Activated CD4-positive, alpha-beta memory T cell treated with anti-CD3 and anti-CD28 coated beads for 36 hours (primary cell): ENCODE measurements at regions of chr5 and their contacts with region 1.

Region 1: GRCh38 chr5:32709781-32710549 is 1.2 kb upstream of the NPR3 start:
- DNase-seq: peak; percentile 70
- H3K4me3 Mint-ChIP-seq: peak overlapping the region; percentile 66
- H3K27ac Mint-ChIP-seq: no peak overlapping the region
- H3K4me1 Mint-ChIP-seq: peaks cover 33% of the 10 kb centered on the region
- H3K27me3 Mint-ChIP-seq: peaks cover 66% of the 10 kb centered on the region

Region 2: DNA sequence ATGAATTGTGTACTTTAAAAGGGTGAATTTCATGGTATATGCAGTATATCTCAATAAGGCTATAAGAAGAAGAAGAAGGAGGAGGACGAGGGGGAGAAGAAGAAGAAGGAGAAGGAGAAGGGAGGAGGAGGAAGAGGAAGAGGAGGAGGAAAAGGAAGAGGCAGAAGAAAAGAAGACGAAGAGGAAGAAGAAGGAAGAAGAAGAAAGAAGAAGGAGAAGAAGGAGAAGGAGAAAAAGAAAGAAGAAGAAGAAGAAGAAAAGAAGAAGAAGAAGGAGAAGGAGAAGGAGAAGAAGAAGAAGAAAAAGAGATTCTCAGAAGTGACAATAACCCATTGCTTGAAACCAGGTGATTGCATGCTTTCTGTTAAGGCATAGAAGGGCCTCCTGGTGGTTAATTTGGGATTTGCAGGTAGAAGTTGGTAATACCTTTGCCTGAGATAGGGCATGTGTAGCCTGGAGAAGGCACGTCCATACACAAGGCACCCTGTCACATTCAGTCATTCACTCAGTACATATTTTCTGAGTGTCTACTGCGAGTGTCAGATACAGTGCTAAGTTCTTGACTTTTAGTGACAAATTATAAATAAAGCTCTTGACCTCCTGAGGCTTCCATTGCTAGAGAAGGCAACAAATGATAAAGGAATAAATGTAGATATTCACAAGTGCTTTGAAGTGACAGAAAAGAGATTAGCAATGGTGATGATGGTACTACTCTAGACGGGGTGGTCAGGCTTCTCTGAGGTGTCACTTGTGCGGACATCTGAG is 232.4 kb after region 1 on chr5:
- CTCF ChIA-PET with region 1: no interaction called
- POLR2A ChIA-PET with region 1: no interaction called
- intact Hi-C with region 1: loop called (anchors 2 kb)
- DNase-seq: no peak
- H3K4me3 Mint-ChIP-seq: no peak overlapping the region
- H3K27ac Mint-ChIP-seq: no peak overlapping the region
- H3K4me1 Mint-ChIP-seq: no peaks in the 10 kb centered on the region
- H3K27me3 Mint-ChIP-seq: no peaks in the 10 kb centered on the region

Region 3: GRCh38 chr5:33299621-33300208 is 589.8 kb after region 1 on chr5:
- CTCF ChIA-PET with region 1: no interaction called
- POLR2A ChIA-PET with region 1: no interaction called
- intact Hi-C with region 1: loop called (anchors 1 kb)
- DNase-seq: no peak
- H3K4me3 Mint-ChIP-seq: no peak overlapping the region
- H3K27ac Mint-ChIP-seq: no peak overlapping the region
- H3K4me1 Mint-ChIP-seq: peaks cover 11% of the 10 kb centered on the region
- H3K27me3 Mint-ChIP-seq: peaks cover 2% of the 10 kb centered on the region

Region 4: DNA sequence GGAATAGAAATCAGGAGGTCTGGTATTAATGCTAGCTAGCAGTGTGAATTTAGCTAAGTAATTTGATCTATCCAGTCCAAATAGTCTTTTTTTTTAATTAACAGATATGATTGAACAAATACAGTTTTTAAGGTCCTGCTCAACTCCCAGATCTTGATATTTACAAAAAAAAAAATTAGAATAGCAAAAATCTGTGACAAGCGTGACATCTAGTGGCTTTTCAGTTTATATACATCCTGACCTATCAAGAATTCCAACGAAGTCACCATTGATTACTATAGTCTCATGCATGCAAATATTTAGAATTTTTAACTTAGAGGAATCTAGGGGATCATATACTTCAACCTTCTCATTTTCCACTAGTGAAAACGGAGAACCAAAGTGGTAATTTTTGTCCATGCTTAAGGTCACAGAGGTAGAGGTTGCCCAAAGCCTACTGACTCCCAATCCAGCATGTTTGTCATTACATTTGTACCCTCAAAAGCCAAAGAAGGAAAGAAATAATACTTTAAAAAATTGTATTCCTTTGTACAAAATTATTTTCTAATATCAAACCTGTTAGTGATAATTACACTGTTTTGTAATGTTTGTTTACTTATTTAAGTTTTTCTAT is 713.2 kb after region 1 on chr5:
- CTCF ChIA-PET with region 1: no interaction called
- POLR2A ChIA-PET with region 1: no interaction called
- intact Hi-C with region 1: loop called (anchors 5 kb)
- DNase-seq: no peak
- H3K4me3 Mint-ChIP-seq: no peak overlapping the region
- H3K27ac Mint-ChIP-seq: no peak overlapping the region
- H3K4me1 Mint-ChIP-seq: no peaks in the 10 kb centered on the region
- H3K27me3 Mint-ChIP-seq: peaks cover 6% of the 10 kb centered on the region